ENCODE measurements at regions of chr10 and their contacts with region 1.

Region 1: DNA sequence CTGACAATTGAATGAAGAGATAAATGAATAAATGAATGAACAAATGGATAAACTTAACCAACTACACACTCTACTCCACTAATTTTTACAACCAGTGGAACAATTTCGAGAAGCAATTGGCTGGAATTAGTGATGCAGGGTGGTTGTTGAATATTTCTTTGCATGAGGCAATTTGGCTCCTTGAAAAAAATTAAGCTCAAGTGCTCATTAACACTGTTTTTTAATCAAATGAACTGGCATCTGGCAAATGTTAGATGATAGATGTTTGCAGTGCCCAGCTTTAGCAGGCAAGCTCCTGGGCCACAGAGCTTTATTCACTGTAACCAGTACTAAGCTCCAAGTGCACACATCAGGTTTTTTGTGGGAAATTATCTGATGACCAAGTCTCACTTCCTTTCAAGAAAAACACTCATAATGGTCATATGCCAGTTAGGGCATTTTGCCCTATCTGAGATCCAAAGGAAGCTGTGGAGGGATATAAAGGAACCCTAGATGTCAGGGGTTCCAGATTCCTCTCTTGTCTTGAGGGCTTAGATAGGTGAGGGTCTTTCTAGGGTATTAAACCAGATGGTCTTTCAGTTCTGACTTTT is 16.4 kb upstream of the ADD3 start:
- DNase-seq: no peak
- ATAC-seq: no peak
- H3K4me3 ChIP-seq: no peak overlapping the region
- H3K27ac ChIP-seq: no peak overlapping the region
- H3K4me1 ChIP-seq: peaks cover 13% of the 10 kb centered on the region
- H3K27me3 ChIP-seq: no peaks in the 10 kb centered on the region
- CTCF ChIP-seq: no peak

Region 2: DNA sequence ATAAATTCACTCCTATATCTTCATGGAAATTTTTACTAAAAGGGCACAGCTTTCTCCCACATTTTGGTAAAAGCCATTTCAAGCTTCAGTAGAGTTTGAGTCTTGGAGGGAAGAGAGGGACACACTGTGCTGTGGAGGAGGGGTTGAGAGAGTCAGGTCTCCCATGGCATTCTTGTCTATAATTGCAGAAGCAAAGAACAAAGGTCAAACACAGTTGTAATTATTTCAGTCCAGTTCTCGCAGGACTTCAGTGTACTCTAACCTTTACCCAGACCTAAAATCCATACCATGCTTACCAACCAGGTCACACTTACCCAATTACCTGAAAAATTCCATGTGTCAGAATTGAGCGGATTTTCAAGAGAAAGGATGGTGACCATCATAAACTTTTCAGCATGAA is 366.4 kb before region 1 on chr10:
- CTCF ChIA-PET with region 1: no interaction called
- POLR2A ChIA-PET with region 1: no interaction called
- intact Hi-C with region 1: no loop called
- DNase-seq: no peak
- ATAC-seq: no peak
- H3K4me3 ChIP-seq: no peak overlapping the region
- H3K27ac ChIP-seq: no peak overlapping the region
- H3K4me1 ChIP-seq: no peaks in the 10 kb centered on the region
- H3K27me3 ChIP-seq: no peaks in the 10 kb centered on the region
- CTCF ChIP-seq: no peak

Region 3: GRCh38 chr10:109866995-109867635 is 124.2 kb before region 1 on chr10:
- CTCF ChIA-PET with region 1: no interaction called
- POLR2A ChIA-PET with region 1: no interaction called
- intact Hi-C with region 1: no loop called
- DNase-seq: no peak
- ATAC-seq: no peak
- H3K4me3 ChIP-seq: no peak overlapping the region
- H3K27ac ChIP-seq: no peak overlapping the region
- H3K4me1 ChIP-seq: no peaks in the 10 kb centered on the region
- H3K27me3 ChIP-seq: no peaks in the 10 kb centered on the region
- CTCF ChIP-seq: no peak

Region 4: GRCh38 chr10:110035070-110035921 is 43.9 kb after region 1 on chr10:
- CTCF ChIA-PET with region 1: no interaction called
- POLR2A ChIA-PET with region 1: interaction called, 19 read pairs
- intact Hi-C with region 1: no loop called
- DNase-seq: no peak
- ATAC-seq: no peak
- H3K4me3 ChIP-seq: no peak overlapping the region
- H3K27ac ChIP-seq: 0 out of 2 replicates have a peak overlapping the region, but pooled peaks have one; percentile 16
- H3K4me1 ChIP-seq: peaks cover 10% of the 10 kb centered on the region
- H3K27me3 ChIP-seq: no peaks in the 10 kb centered on the region
- CTCF ChIP-seq: peak; percentile 52